GM12878 (cell line): ENCODE measurements at regions of chr3 and their contacts with region 1.

Region 1: GRCh38 chr3:59212128-59212779 is 162.4 kb upstream of the CFAP20DC start:
- DNase-seq: peak; percentile 19
- ATAC-seq: peak; percentile 97
- H3K4me3 ChIP-seq: no peak overlapping the region
- H3K27ac ChIP-seq: no peak overlapping the region
- H3K4me1 ChIP-seq: no peaks in the 10 kb centered on the region
- H3K27me3 ChIP-seq: no peaks in the 10 kb centered on the region
- CTCF ChIP-seq: peak; percentile 52 to 73 (median 66)
- EP300 ChIP-seq: no peak
- POLR2A ChIP-seq: no peak
- RAD21 ChIP-seq: peak; percentile 92

Region 2: DNA sequence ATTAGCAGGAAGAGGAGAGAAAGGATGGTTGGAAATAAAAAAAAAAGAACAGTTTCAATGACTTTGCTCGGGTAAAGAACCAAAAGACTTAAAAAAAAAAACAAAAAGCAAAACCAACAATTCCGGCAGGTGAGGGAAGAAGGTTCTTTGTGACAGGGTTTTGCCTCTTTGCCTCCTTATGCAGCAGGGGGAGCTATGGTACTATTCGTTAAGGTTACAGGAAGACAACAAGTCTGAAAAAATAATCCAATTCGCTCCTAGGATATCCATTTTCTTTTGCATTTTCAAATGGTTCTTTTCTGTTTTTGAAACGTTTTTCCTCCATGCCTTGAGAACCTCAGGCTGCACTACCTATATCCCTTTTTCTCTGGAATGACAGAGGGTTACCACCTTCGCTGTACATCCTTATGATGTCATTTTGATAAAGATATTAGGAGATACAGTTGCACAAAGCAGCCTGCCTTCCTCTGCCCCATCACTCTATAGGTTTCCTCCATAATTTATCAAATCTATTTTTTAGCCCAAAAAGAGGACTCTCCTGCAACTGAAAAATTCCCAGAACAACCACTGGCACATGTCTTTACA is 217.4 kb before region 1 on chr3:
- CTCF ChIA-PET with region 1: interaction called, 3 read pairs
- POLR2A ChIA-PET with region 1: no interaction called
- RAD21 ChIA-PET with region 1: no interaction called
- SMC1A ChIA-PET with region 1: interaction called, 3 read pairs
- in situ Hi-C with region 1: no loop called
- intact Hi-C with region 1: loop called (anchors 2 kb)
- DNase-seq: peak; percentile 23
- ATAC-seq: peak; percentile 86
- H3K4me3 ChIP-seq: no peak overlapping the region
- H3K27ac ChIP-seq: no peak overlapping the region
- H3K4me1 ChIP-seq: no peaks in the 10 kb centered on the region
- H3K27me3 ChIP-seq: no peaks in the 10 kb centered on the region
- CTCF ChIP-seq: peak; percentile 65 to 75 (median 72)
- EP300 ChIP-seq: no peak
- POLR2A ChIP-seq: no peak
- RAD21 ChIP-seq: peak; percentile 73

Region 3: GRCh38 chr3:59049671-59050331 is 162.5 kb before region 1 on chr3 and contains the start of gene CFAP20DC:
- CTCF ChIA-PET with region 1: no interaction called
- POLR2A ChIA-PET with region 1: no interaction called
- RAD21 ChIA-PET with region 1: no interaction called
- SMC1A ChIA-PET with region 1: no interaction called
- in situ Hi-C with region 1: no loop called
- intact Hi-C with region 1: no loop called
- DNase-seq: peak; percentile 62
- ATAC-seq: peak; percentile 98
- H3K4me3 ChIP-seq: peak within 1 kb of the TSS; percentile 66
- H3K27ac ChIP-seq: 0 out of 2 replicates have a peak within 1 kb of the TSS, but pooled peaks have one; percentile 10
- H3K4me1 ChIP-seq: no peaks in the 10 kb centered on the region
- H3K27me3 ChIP-seq: no peaks in the 10 kb centered on the region
- CTCF ChIP-seq: no peak
- EP300 ChIP-seq: no peak
- POLR2A ChIP-seq: peak; percentile 84
- RAD21 ChIP-seq: no peak
- polyA plus RNA-seq, gene CFAP20DC: 0.53 to 1.2 TPM

Region 4: DNA sequence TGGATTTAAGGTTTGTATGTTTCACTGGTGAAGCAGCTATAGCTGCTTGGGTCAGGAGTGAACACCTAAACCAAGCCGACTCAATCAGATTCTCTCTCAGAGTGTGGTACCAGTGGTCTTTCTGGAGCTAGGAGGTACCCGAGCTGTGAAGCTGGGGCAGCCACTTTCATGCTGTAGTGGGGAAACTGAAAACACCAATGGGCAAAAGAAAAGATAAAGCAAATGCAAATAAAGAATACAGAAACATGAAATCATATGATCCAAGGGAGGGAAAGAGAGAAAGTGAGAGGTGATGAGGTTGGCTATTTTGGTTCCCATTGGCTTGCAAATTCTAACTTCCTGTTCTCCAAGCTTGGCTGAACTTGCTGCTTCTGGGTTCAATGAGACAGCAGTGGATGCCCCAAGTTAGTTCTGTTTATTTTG is 49.8 kb after region 1 on chr3:
- CTCF ChIA-PET with region 1: interaction called, 7 read pairs
- POLR2A ChIA-PET with region 1: no interaction called
- RAD21 ChIA-PET with region 1: interaction called, 4 read pairs
- SMC1A ChIA-PET with region 1: interaction called, 19 read pairs
- in situ Hi-C with region 1: no loop called
- intact Hi-C with region 1: loop called (anchors 2 kb)
- DNase-seq: peak; percentile 69
- ATAC-seq: peak; percentile 95
- H3K4me3 ChIP-seq: no peak overlapping the region
- H3K27ac ChIP-seq: no peak overlapping the region
- H3K4me1 ChIP-seq: peaks cover 3% of the 10 kb centered on the region; the same call in 1 of the 2 replicates
- H3K27me3 ChIP-seq: no peaks in the 10 kb centered on the region
- CTCF ChIP-seq: no peak
- EP300 ChIP-seq: peak in 1 of 2 experiments; percentile 47; a peak in 1 of 4 replicates
- POLR2A ChIP-seq: no peak
- RAD21 ChIP-seq: no peak

Region 5: DNA sequence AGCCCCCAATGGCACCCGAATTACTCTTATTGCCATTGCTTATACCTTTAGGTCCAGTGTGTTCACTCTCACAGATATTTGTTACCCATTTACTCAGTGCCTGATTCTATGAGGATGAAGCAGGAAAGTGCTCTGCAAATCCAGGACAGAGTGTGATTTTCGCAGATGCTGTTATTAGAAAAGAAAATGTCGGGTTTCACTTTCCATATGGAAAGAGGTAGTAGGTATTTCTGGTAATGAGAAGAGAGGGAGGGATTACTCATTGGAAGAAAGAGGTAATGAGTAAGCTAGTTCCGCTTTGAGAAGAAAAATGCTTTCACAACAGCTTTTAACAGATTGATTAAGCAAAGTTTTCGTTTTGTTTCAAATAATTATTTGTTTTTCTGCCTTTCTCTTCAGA is 173.9 kb after region 1 on chr3:
- CTCF ChIA-PET with region 1: interaction called, 7 read pairs
- POLR2A ChIA-PET with region 1: no interaction called
- RAD21 ChIA-PET with region 1: interaction called, 3 read pairs
- SMC1A ChIA-PET with region 1: interaction called, 6 read pairs
- in situ Hi-C with region 1: no loop called
- intact Hi-C with region 1: loop called (anchors 5 kb)
- DNase-seq: peak; percentile 88
- ATAC-seq: peak; percentile 75
- H3K4me3 ChIP-seq: peak overlapping the region; percentile 17; the same call in 1 of the 2 replicates
- H3K27ac ChIP-seq: peak overlapping the region; percentile 90
- H3K4me1 ChIP-seq: peaks cover 58% of the 10 kb centered on the region
- H3K27me3 ChIP-seq: no peaks in the 10 kb centered on the region
- CTCF ChIP-seq: no peak
- EP300 ChIP-seq: peak; percentile 95 to 100
- POLR2A ChIP-seq: no peak
- RAD21 ChIP-seq: 0 out of 2 replicates have a peak, but pooled peaks have one; percentile 6

Region 6: DNA sequence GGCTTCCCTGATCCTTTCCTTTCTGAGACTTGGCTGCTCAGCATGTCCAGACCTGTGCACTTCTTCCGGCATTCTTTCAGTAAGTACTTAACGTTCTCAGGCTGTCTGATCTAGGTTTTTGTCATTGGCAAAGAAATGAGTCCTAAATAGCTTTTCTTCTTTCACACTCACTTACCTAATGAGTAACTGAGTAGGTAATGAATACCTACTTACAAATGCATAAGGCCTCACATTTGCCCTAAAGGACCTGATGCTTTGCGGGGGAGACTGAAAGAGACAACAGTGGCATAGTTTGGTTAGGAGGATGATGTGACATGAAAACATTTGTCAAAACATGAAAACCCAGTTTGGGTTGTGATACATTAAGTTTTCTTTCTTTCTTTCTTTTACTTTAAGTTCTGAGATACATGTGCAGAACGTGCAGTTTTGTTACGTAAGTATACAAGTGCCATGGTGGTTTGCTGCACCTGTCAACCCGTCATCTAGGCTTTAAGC is 354.3 kb after region 1 on chr3:
- CTCF ChIA-PET with region 1: interaction called, 11 read pairs
- POLR2A ChIA-PET with region 1: no interaction called
- RAD21 ChIA-PET with region 1: interaction called, 3 read pairs
- SMC1A ChIA-PET with region 1: interaction called, 14 read pairs
- in situ Hi-C with region 1: loop called (anchors 5 kb)
- intact Hi-C with region 1: loop called (anchors 2 kb)
- DNase-seq: peak; percentile 68
- ATAC-seq: peak; percentile 98
- H3K4me3 ChIP-seq: no peak overlapping the region
- H3K27ac ChIP-seq: peak overlapping the region; percentile 54
- H3K4me1 ChIP-seq: peaks cover 32% of the 10 kb centered on the region
- H3K27me3 ChIP-seq: no peaks in the 10 kb centered on the region
- CTCF ChIP-seq: no peak
- EP300 ChIP-seq: peak; percentile 87 to 93; a peak in 3 of 4 replicates
- POLR2A ChIP-seq: no peak
- RAD21 ChIP-seq: no peak

Region 7: GRCh38 chr3:59857589-59858346 is 645.5 kb after region 1 on chr3:
- CTCF ChIA-PET with region 1: interaction called, 75 read pairs
- POLR2A ChIA-PET with region 1: interaction called, 8 read pairs
- RAD21 ChIA-PET with region 1: interaction called, 33 read pairs
- SMC1A ChIA-PET with region 1: interaction called, 57 read pairs
- in situ Hi-C with region 1: loop called (anchors 5 kb)
- intact Hi-C with region 1: loop called (anchors 1 kb)
- DNase-seq: peak; percentile 17
- ATAC-seq: peak; percentile 100
- H3K4me3 ChIP-seq: no peak overlapping the region
- H3K27ac ChIP-seq: no peak overlapping the region
- H3K4me1 ChIP-seq: no peaks in the 10 kb centered on the region
- H3K27me3 ChIP-seq: no peaks in the 10 kb centered on the region; a peak in 1 of 4 replicates
- CTCF ChIP-seq: peak; percentile 89 to 96 (median 95)
- EP300 ChIP-seq: no peak
- POLR2A ChIP-seq: no peak
- RAD21 ChIP-seq: peak; percentile 85